ENCODE measurements at regions of chr1 and their contacts with region 1.

Region 1: DNA sequence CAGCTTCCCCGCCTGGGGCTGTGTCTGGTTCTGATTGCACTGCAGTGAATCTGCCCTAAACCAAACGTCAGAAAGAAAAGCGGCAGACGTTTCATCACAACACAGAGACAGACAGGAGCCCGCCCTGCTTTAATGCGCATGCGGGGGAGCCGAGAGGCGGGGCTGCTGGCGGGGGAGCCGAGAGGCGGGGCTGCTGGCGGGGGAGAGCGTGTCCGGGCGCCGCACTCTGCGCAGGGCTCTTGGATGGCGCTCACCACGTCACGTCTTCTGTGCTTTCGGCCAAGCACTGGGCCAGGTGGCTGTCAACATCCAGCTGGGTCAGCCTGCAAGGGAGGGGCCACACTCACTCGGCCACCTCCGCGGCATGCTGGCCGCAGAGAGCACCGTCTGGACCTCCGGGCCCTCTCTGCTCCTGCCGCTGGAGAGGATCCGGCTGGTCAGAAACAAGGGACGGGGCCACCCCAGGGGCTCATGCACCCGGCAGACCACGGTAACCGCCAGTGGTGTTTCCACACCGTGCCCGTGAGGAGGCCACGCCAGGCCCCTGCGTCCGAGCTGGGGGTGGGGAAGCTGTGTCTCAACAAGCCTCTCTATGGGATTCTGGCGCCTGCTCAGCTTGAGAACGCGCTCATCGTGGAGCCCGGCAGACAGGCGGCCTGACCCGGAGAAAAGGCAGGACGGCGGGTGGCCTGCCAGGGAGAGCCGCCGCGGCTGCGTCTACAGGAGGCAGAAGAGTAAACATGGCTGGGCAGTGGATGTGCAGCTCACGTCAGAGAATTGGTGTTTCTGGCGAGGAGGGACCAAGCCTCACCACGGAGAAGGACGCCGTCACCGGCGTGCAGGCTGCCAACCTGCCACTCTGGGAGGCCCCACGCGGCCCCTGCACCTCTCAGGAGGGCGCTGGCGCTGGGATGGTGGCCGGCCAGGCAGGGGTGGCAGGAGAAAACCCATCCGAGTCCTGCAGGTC is 4.8 kb downstream of the FAAP20 start:
- DNase-seq: peak; percentile 91
- CTCF ChIP-seq: no peak

Region 2: GRCh38 chr1:2381741-2382620 is 192.2 kb after region 1 on chr1:
- CTCF ChIA-PET with region 1: interaction called, 182 read pairs
- POLR2A ChIA-PET with region 1: no interaction called
- DNase-seq: peak; percentile 92
- CTCF ChIP-seq: peak; percentile 96